ENCODE measurements at regions of chr5 and their contacts with region 1.

Region 1: GRCh38 chr5:175444060-175444904 is at the start of gene DRD1:
- DNase-seq: peak; percentile 33 to 38
- H3K4me3 ChIP-seq: no peak within 1 kb of the TSS
- H3K27ac ChIP-seq: no peak within 1 kb of the TSS
- H3K4me1 ChIP-seq: peaks cover 5 to 15% of the 10 kb centered on the region in 2 donors
- H3K27me3 ChIP-seq: peaks cover 8% of the 10 kb centered on the region
- CTCF ChIP-seq: peak in 5 of 6 experiments; percentile 32 to 85 (median 63)
- POLR2A ChIP-seq: no peak
- total RNA-seq, gene DRD1: not detected

Region 2: DNA sequence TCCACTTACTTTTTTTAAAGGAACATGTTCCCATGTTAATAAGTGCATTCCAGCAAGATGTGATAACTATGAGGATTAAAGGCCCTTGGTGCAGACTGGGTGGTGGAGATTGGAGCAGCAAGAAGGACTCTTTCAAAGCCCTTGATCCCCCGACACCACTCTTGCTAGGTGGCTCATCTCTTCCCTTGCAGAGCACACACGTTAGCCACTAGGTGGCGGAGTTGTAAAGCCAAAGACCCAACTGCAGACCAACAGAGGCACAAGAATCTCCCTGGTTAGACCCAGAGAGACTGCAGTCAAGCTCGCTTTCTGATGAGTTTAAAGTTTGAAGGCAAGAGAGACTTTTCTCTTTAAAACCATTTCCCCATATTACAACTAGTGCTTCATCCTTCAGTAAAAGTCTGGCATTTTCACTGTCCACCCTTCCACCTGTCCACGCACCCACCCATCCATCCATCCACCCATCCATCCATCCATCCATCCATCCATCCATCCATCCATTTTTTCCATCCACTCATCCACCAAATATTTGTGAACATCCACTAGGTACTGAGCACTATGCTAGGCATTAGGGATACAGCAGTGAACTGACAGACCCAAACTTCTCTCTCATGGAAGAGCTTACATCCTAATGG is 493.0 kb before region 1 on chr5:
- intact Hi-C with region 1: loop called (anchors 5 kb)
- DNase-seq: peak; percentile 52 to 67
- H3K4me3 ChIP-seq: no peak overlapping the region
- H3K27ac ChIP-seq: no peak overlapping the region
- H3K4me1 ChIP-seq: peaks cover 0 to 17% of the 10 kb centered on the region in 2 donors
- H3K27me3 ChIP-seq: no peaks in the 10 kb centered on the region
- CTCF ChIP-seq: peak; percentile 66 to 92 (median 80)
- POLR2A ChIP-seq: no peak

Region 3: GRCh38 chr5:175363300-175363699 is 81.0 kb before region 1 on chr5:
- intact Hi-C with region 1: no loop called
- DNase-seq: no peak
- H3K4me3 ChIP-seq: no peak overlapping the region
- H3K27ac ChIP-seq: no peak overlapping the region
- H3K4me1 ChIP-seq: no peaks in the 10 kb centered on the region
- H3K27me3 ChIP-seq: no peaks in the 10 kb centered on the region
- CTCF ChIP-seq: no peak
- POLR2A ChIP-seq: no peak

Measured in thyroid gland (tissue), 4 donors.